Activated CD4-positive, alpha-beta memory T cell treated with anti-CD3 and anti-CD28 coated beads for 36 hours (primary cell): ENCODE measurements at regions of chr2 and their contacts with region 1.

Region 1: DNA sequence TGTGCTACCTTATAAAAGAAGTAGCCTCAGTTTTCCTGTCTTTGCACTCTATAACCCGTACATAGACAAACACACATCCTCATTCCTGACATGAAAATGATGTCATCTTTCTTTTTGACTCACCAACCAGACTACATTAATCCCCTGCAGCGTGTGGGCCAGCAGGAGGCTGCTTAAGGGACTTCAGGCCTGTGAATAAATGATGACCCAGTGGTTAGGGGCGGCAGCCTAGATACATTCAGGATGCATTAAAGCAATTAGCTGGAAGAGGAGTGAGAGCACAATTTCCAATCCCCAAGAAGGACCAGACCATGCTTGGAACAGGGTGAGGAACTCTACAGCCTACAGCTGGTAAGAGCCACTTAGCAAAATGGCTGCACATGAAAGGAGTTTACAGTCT is 57.3 kb upstream of the KLF7 start:
- DNase-seq: peak; percentile 56
- H3K4me3 Mint-ChIP-seq: no peak overlapping the region
- H3K27ac Mint-ChIP-seq: peak overlapping the region; percentile 24
- H3K4me1 Mint-ChIP-seq: peaks cover 46% of the 10 kb centered on the region
- H3K27me3 Mint-ChIP-seq: peaks cover 3% of the 10 kb centered on the region

Region 2: DNA sequence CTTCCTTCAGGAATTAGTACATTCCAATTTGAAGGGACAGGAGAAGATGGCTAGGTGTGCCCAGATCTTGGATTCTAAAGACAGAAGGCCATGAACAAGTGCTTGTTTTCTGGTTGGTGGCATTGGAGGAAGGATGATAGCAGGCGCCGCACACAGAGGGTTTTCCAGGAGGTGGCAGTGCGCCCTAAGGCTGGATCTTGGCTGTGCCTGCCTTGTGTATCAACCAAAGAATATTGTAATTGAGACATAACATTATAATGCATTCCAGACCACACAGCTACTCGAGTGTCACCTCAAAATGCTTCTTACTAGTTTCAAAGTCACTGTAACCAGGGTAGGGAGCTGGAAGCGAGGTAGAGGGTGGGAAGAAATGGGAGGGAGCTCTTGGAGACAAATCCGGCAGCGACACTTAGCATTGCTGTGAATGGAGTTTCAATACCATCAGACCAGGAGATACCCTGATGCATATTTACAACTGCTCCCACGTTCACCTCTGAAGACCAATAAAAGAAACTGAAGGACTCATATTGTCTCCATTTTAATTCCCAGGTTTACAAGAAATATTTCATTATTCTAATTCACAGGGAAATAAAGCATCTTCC is 241.2 kb before region 1 on chr2:
- CTCF ChIA-PET with region 1: no interaction called
- POLR2A ChIA-PET with region 1: no interaction called
- intact Hi-C with region 1: loop called (anchors 10 kb)
- DNase-seq: peak; percentile 70
- H3K4me3 Mint-ChIP-seq: no peak overlapping the region
- H3K27ac Mint-ChIP-seq: no peak overlapping the region
- H3K4me1 Mint-ChIP-seq: peaks cover 5% of the 10 kb centered on the region
- H3K27me3 Mint-ChIP-seq: no peaks in the 10 kb centered on the region

Region 3: GRCh38 chr2:207121784-207122183 is 101.3 kb before region 1 on chr2:
- CTCF ChIA-PET with region 1: no interaction called
- POLR2A ChIA-PET with region 1: no interaction called
- intact Hi-C with region 1: loop called (anchors 1 kb)
- DNase-seq: no peak
- H3K4me3 Mint-ChIP-seq: no peak overlapping the region
- H3K27ac Mint-ChIP-seq: peak overlapping the region; percentile 55
- H3K4me1 Mint-ChIP-seq: peaks cover 61% of the 10 kb centered on the region
- H3K27me3 Mint-ChIP-seq: no peaks in the 10 kb centered on the region

Region 4: DNA sequence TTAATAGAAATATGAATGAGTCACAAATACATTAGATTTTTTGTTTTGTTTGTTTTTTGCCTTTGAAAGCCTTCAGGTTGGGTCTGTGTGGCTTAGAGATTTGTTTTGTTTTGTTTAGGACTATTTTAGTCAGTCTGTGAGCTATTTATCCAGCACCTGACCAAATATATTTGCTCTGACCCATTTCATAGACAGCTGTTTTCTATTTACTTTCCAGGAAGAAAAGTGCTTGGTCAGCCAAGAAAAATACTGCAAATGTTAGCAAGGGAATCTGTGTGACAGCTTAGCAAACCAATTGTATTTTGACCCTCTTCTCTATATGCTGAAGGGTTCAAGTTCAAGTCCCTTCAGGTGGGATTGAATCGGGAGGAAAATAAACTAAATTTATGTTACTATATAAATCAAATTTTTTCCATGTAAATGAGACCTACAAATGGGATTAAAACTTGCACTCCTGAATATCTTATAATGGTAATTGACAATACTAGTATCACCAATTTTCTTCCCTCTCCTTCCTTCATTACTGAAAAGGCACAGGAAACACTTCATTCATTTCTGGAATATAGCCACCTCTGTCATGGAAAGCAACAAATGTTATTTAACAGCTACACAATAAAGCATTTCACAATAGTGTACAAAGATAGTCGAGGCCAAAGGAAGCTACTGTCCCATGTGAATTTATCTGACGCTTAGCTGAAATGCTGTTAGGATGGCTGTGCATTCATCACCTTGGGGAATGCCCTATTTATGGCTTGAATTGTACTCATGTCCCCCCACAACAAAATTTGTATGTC is 34.2 kb before region 1 on chr2:
- CTCF ChIA-PET with region 1: no interaction called
- POLR2A ChIA-PET with region 1: no interaction called
- intact Hi-C with region 1: loop called (anchors 2 kb)
- DNase-seq: no peak
- H3K4me3 Mint-ChIP-seq: no peak overlapping the region
- H3K27ac Mint-ChIP-seq: no peak overlapping the region
- H3K4me1 Mint-ChIP-seq: peaks cover 7% of the 10 kb centered on the region
- H3K27me3 Mint-ChIP-seq: peaks cover 5% of the 10 kb centered on the region

Region 5: DNA sequence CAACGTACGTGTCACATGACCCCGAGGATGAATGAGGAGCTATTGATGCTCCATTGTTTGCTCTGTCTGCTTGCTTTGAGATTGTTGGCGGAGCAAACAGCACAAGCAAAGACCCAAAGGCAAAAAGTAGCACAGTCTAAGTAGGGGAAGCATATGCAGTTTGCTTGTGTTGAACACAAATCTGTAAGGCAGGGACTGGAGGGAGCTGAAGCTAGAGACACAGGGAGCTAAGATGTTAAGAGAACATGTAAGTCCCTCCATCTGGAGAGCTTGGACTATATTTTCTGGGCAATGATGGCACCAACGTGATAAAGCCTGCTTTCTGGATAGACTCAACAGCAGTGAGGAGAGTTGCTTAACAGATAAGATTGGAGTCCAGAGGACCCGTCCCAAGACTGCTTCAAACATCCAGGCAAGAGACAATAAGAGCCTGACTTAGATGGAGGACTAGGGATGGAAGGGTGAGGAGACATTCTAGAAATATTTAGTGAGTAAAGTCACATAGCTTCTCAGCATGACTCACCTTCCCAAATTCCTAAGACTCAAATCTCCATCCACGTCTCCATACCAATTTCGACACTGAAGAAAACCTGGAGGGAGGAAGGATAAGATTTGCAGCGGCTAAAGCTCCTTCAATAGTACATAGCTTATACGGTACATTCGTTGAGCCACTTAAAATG is 30.8 kb after region 1 on chr2:
- CTCF ChIA-PET with region 1: no interaction called
- POLR2A ChIA-PET with region 1: interaction called, 3 read pairs
- intact Hi-C with region 1: loop called (anchors 1 kb)
- DNase-seq: no peak
- H3K4me3 Mint-ChIP-seq: no peak overlapping the region
- H3K27ac Mint-ChIP-seq: peak overlapping the region; percentile 9
- H3K4me1 Mint-ChIP-seq: peaks cover 56% of the 10 kb centered on the region
- H3K27me3 Mint-ChIP-seq: peaks cover 7% of the 10 kb centered on the region

Region 6: GRCh38 chr2:207311316-207312005 is 88.4 kb after region 1 on chr2:
- CTCF ChIA-PET with region 1: no interaction called
- POLR2A ChIA-PET with region 1: no interaction called
- intact Hi-C with region 1: loop called (anchors 1 kb)
- DNase-seq: peak; percentile 76
- H3K4me3 Mint-ChIP-seq: peak overlapping the region; percentile 3
- H3K27ac Mint-ChIP-seq: peak overlapping the region; percentile 79
- H3K4me1 Mint-ChIP-seq: peaks cover 28% of the 10 kb centered on the region
- H3K27me3 Mint-ChIP-seq: no peaks in the 10 kb centered on the region